H1 (cell line): ENCODE measurements at regions of chr17 and their contacts with region 1.

Region 1: GRCh38 chr17:82105882-82106687 is 8.0 kb upstream of the FASN start:
- DNase-seq: peak; percentile 43 to 79
- H3K4me3 ChIP-seq: no peak overlapping the region
- H3K27ac ChIP-seq: no peak overlapping the region
- H3K4me1 ChIP-seq: peaks cover 0 to 49% (median 42%) of the 10 kb centered on the region in 4 experiments; a peak in 6 of 7 replicates
- H3K27me3 ChIP-seq: no peaks in the 10 kb centered on the region
- CTCF ChIP-seq: peak; percentile 67 to 70 (median 69)
- EP300 ChIP-seq: no peak
- POLR2A ChIP-seq: no peak; a peak in 1 of 3 replicates
- RAD21 ChIP-seq: peak; percentile 35 to 53

Region 2: GRCh38 chr17:82120148-82120547 is 14.1 kb after region 1 on chr17:
- CTCF ChIA-PET with region 1: interaction called, 61 read pairs
- POLR2A ChIA-PET with region 1: interaction called, 13 read pairs
- DNase-seq: no peak
- H3K4me3 ChIP-seq: no peak overlapping the region
- H3K27ac ChIP-seq: no peak overlapping the region
- H3K4me1 ChIP-seq: peaks cover 0 to 8% (median 2%) of the 10 kb centered on the region in 4 experiments; a peak in 4 of 7 replicates
- H3K27me3 ChIP-seq: no peaks in the 10 kb centered on the region
- CTCF ChIP-seq: no peak
- EP300 ChIP-seq: no peak
- POLR2A ChIP-seq: no peak
- RAD21 ChIP-seq: no peak

Region 3: GRCh38 chr17:82246365-82247174 is 140.5 kb after region 1 on chr17:
- CTCF ChIA-PET with region 1: no interaction called
- POLR2A ChIA-PET with region 1: no interaction called
- DNase-seq: no peak
- H3K4me3 ChIP-seq: no peak overlapping the region
- H3K27ac ChIP-seq: no peak overlapping the region
- H3K4me1 ChIP-seq: no peaks in the 10 kb centered on the region; a peak in 1 of 7 replicates
- H3K27me3 ChIP-seq: no peaks in the 10 kb centered on the region
- CTCF ChIP-seq: no peak
- EP300 ChIP-seq: no peak
- POLR2A ChIP-seq: no peak
- RAD21 ChIP-seq: no peak